Right cardiac atrium (tissue), 5 donors: ENCODE measurements at regions of chr1 and their contacts with region 1.

Region 1: DNA sequence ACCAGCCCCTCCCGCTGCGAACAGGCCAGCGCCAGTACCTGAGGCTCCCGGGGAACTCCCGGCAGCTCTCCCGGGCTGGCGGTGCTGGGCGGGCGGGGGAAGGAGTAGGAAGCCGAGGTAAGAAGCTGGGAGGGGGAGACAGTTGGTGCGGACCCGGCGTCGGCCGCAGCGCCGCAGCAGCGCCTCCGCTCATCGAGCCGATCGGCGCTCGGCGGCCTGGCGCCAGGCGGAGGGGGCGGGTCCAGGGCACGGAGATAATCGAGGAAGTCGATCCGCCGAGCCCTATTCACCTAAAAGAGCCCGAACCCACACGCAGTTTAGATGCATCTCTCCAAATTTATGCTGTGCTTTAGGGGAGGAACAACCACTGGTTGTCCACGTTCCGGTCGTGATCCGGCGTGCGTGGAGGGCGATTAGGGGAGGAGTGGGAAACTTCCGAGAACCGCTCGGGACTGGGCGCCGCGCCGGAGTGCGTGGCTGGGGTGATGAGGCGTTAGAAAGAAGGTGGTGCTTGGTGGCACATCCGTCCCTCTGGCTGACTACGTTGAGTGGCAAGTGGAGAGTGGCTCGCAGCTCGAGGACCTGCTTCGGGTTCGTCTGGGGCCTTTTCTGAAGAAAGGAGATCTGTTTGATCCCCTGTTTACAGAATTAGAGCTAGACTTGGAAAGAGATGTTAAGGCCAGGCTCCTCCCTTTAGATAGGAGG is at the start of gene VAMP4:
- DNase-seq: peak; percentile 88 to 95 (median 95)
- ATAC-seq: peak; percentile 94 to 95
- H3K4me3 ChIP-seq: peak within 1 kb of the TSS; percentile 90
- H3K27ac ChIP-seq: peak within 1 kb of the TSS; percentile 92
- H3K4me1 ChIP-seq: no peaks in the 10 kb centered on the region
- H3K27me3 ChIP-seq: no peaks in the 10 kb centered on the region
- total RNA-seq, gene VAMP4: 9.3 to 11.1 (median 9.7) TPM

Region 2: GRCh38 chr1:171781176-171781875 is 39.3 kb after region 1 on chr1 and contains the start of gene METTL13:
- intact Hi-C with region 1: loop called in 1 of 4 experiments (anchors 5 kb)
- DNase-seq: peak; percentile 99
- ATAC-seq: peak; percentile 100
- H3K4me3 ChIP-seq: peak within 1 kb of the TSS; percentile 93
- H3K27ac ChIP-seq: peak within 1 kb of the TSS; percentile 91
- H3K4me1 ChIP-seq: no peaks in the 10 kb centered on the region
- H3K27me3 ChIP-seq: no peaks in the 10 kb centered on the region
- total RNA-seq, gene METTL13: 11.4 to 19.9 (median 14.2) TPM

Region 3: DNA sequence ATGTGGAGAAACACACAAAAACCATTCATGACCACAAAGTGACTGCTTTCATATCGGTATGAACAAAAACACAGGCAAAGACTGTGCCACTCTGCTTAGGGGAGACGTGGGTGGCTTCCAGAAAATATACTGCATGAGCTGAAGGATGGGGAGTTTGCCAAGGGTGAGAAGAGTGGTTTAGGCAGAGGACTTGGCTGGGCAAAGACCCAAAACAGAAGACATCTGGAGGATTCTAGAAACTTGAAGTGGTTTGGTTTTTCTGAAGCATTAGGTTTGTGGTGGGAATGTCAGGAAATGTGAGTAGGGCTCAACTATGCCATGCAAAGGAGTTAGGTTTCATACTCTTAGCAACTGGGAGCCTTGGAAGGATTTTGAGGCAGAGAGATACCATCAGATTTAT is 72.7 kb after region 1 on chr1:
- intact Hi-C with region 1: no loop called
- DNase-seq: no peak
- ATAC-seq: no peak
- H3K4me3 ChIP-seq: no peak overlapping the region
- H3K27ac ChIP-seq: no peak overlapping the region
- H3K4me1 ChIP-seq: no peaks in the 10 kb centered on the region
- H3K27me3 ChIP-seq: no peaks in the 10 kb centered on the region

Region 4: DNA sequence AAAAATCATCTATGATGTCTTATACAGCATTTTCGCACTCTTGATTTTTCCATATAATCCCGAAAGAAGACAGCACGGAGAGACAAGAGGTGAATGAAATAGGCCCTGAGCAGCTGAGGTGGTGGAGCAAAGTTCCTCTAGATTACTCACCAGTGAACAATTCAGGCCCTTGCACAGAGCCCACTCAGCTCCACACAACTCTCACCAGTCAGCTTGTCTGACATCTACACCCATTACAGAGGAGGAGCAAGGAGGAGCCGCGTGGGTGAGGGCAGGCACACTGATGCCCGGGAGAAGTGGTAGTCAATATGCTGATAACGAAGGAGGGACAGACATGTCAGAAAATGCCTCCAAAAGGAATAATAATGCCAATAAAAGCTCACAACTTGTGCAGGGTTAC is 159.2 kb after region 1 on chr1:
- intact Hi-C with region 1: no loop called
- DNase-seq: no peak
- ATAC-seq: no peak
- H3K4me3 ChIP-seq: no peak overlapping the region
- H3K27ac ChIP-seq: no peak overlapping the region
- H3K4me1 ChIP-seq: no peaks in the 10 kb centered on the region
- H3K27me3 ChIP-seq: no peaks in the 10 kb centered on the region